GM23248 (cell line): ENCODE measurements at regions of chr17 and their contacts with region 1.

Region 1: GRCh38 chr17:9924735-9925191 is 19.7 kb upstream of the RCVRN start:
- DNase-seq: peak; percentile 86
- H3K4me3 ChIP-seq: no peak overlapping the region
- H3K27ac ChIP-seq: no peak overlapping the region
- H3K4me1 ChIP-seq: no peaks in the 10 kb centered on the region
- H3K27me3 ChIP-seq: no peaks in the 10 kb centered on the region

Region 2: GRCh38 chr17:10018461-10018891 is 93.7 kb after region 1 on chr17:
- in situ Hi-C with region 1: no loop called
- DNase-seq: no peak
- H3K4me3 ChIP-seq: no peak overlapping the region
- H3K27ac ChIP-seq: no peak overlapping the region
- H3K4me1 ChIP-seq: no peaks in the 10 kb centered on the region
- H3K27me3 ChIP-seq: no peaks in the 10 kb centered on the region

Region 3: DNA sequence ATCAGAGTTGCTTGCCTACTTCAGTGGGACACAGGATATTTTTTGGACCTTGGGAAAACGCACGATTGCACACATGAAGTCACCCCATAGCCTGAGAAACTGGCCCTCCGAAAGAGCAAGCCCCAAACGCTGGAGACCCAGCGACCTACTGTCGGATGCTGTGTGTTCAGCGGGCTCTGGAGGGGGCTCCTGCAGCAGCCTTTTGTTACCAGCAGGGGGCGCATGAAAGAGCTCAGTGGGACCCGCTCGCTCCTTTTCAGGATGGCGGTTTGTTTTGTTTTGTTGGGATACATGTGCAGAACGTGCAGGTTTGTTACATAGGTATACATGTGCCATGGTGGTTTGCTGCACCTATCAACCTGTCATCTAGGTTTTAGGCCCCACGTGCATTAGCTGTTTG is 704.0 kb after region 1 on chr17:
- in situ Hi-C with region 1: loop called (anchors 10 kb)
- DNase-seq: no peak
- H3K4me3 ChIP-seq: no peak overlapping the region
- H3K27ac ChIP-seq: no peak overlapping the region
- H3K4me1 ChIP-seq: no peaks in the 10 kb centered on the region
- H3K27me3 ChIP-seq: no peaks in the 10 kb centered on the region